MCF 10A (cell line): ENCODE measurements at regions of chr12 and their contacts with region 1.

Region 1: DNA sequence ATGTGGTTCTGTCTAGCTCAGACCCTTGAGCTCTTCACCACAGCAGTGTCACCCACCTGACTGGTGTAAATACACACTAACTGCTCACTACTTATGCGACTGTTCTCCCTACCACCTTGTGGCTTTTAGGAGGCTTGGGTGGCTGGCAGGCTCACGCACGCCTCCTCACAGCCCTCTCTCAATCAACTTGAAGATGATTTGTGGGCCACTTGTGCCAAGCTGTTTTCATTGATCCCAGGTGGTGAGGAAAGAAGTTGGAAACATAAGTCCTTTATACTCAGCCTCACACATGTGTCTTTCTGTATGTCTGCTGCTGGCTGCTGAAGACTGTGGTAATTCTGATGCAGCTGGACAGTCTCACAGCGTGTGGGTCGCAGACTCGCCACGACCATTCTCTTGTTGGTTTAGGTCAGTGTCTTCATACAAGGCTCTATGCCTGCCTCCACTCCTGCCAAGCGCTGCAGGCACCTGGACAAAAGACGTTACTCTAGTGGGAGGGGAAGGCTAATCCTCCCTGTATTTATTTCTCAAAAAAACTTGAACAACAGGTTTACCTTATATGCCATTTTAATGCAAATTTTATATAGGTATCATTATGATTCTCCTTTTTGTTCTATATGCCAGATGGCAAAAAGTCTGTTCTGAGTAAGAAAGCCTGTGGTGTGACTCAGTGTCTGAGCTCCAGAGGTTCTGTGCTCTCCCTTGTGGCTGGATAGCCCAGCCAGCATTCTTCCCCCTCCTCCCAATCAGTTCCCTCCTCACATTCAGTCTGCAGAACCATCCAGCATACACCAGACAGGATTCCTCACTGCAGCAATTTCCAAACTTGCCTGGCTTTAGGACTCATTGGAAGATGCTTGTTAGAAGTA is 115.6 kb downstream of the DIP2B start:
- DNase-seq: peak; percentile 61
- H3K4me3 Mint-ChIP-seq: peak overlapping the region; percentile 28
- H3K27ac Mint-ChIP-seq: peak overlapping the region; percentile 61
- H3K4me1 Mint-ChIP-seq: peaks cover 56% of the 10 kb centered on the region
- H3K27me3 Mint-ChIP-seq: no peaks in the 10 kb centered on the region
- CTCF ChIP-seq: no peak

Region 2: GRCh38 chr12:50572271-50572670 is 48.1 kb before region 1 on chr12:
- CTCF ChIA-PET with region 1: interaction called, 4 read pairs
- POLR2A ChIA-PET with region 1: interaction called, 15 read pairs
- intact Hi-C with region 1: no loop called
- DNase-seq: peak; percentile 84
- H3K4me3 Mint-ChIP-seq: no peak overlapping the region
- H3K27ac Mint-ChIP-seq: peak overlapping the region; percentile 70
- H3K4me1 Mint-ChIP-seq: peaks cover 24% of the 10 kb centered on the region
- H3K27me3 Mint-ChIP-seq: no peaks in the 10 kb centered on the region
- CTCF ChIP-seq: no peak